CD4-positive, alpha-beta T cell (primary cell): ENCODE measurements at regions of chr20 and their contacts with region 1.

Region 1: DNA sequence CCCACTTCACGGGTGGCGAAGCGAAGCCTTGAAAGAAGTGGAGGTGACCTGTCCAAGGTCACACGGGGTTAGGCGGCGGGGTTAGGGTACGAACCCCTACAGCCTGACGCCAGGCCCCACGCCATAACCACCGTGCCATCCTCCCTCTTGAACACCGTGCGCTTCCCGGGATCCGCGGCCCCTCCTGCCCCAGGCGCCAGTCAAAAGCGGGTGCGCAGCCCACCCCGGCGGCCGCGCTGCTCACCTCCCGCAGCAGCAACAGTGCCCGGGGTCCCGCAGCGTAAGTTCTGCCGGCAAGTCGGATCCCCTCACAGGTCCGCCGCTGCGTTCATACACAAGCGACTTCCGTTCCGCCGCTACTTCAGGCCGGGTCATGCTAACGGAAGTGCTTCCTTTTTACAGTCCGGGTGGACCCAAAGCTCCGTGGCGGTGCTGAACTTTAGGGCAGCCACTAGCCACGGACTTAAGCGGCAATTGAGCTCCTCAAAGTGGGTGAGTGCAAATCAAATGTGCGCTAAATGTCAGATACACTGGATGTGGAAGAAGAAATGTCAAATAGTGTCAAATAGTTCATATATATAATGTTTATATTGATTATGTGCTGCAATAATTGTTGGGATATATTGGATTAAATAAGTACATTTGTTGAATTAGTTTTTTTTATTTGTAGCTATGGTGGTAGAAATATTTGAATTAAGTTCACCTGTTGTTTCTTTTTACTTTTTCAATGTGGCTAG is at the start of gene CDK5RAP1:
- DNase-seq: peak; percentile 73 to 93 (median 78)
- ATAC-seq: peak; percentile 95
- H3K4me3 ChIP-seq: peak within 1 kb of the TSS; percentile 99
- H3K4me3 Mint-ChIP-seq: peak within 1 kb of the TSS; percentile 96
- H3K27ac ChIP-seq: peak within 1 kb of the TSS in 1 of 2 donors; percentile 24
- H3K27ac Mint-ChIP-seq: peak within 1 kb of the TSS; percentile 79
- H3K4me1 ChIP-seq: peaks cover 48% of the 10 kb centered on the region
- H3K4me1 Mint-ChIP-seq: peaks cover 64% of the 10 kb centered on the region
- H3K27me3 ChIP-seq: no peaks in the 10 kb centered on the region
- H3K27me3 Mint-ChIP-seq: no peaks in the 10 kb centered on the region
- CTCF ChIP-seq: no peak
- total RNA-seq, gene CDK5RAP1: 59.7 to 63.0 TPM

Region 2: GRCh38 chr20:33443512-33444239 is 42.3 kb after region 1 on chr20 and contains the start of gene SNTA1:
- CTCF ChIA-PET with region 1: interaction called, 7 read pairs
- POLR2A ChIA-PET with region 1: interaction called, 24 read pairs
- intact Hi-C with region 1: loop called (anchors 1 kb)
- DNase-seq: peak; percentile 74 to 95 (median 86)
- ATAC-seq: peak; percentile 57
- H3K4me3 ChIP-seq: peak within 1 kb of the TSS; percentile 90
- H3K4me3 Mint-ChIP-seq: peak within 1 kb of the TSS; percentile 95
- H3K27ac ChIP-seq: peak within 1 kb of the TSS; percentile 72 to 80
- H3K27ac Mint-ChIP-seq: peak within 1 kb of the TSS; percentile 94
- H3K4me1 ChIP-seq: peaks cover 25% of the 10 kb centered on the region
- H3K4me1 Mint-ChIP-seq: peaks cover 22% of the 10 kb centered on the region
- H3K27me3 ChIP-seq: no peaks in the 10 kb centered on the region
- H3K27me3 Mint-ChIP-seq: no peaks in the 10 kb centered on the region
- CTCF ChIP-seq: no peak
- total RNA-seq, gene SNTA1: 5.0 to 5.2 TPM

Region 3: GRCh38 chr20:33893314-33893713 is 492.0 kb after region 1 on chr20:
- CTCF ChIA-PET with region 1: no interaction called
- POLR2A ChIA-PET with region 1: no interaction called
- intact Hi-C with region 1: no loop called
- DNase-seq: no peak
- ATAC-seq: no peak
- H3K4me3 ChIP-seq: no peak overlapping the region
- H3K4me3 Mint-ChIP-seq: no peak overlapping the region
- H3K27ac ChIP-seq: no peak overlapping the region
- H3K27ac Mint-ChIP-seq: no peak overlapping the region
- H3K4me1 ChIP-seq: no peaks in the 10 kb centered on the region
- H3K4me1 Mint-ChIP-seq: no peaks in the 10 kb centered on the region
- H3K27me3 ChIP-seq: peaks cover 3 to 4% of the 10 kb centered on the region in 2 experiments
- H3K27me3 Mint-ChIP-seq: peaks cover 9% of the 10 kb centered on the region
- CTCF ChIP-seq: no peak